ENCODE measurements at regions of chr1 and their contacts with region 1.

Region 1: DNA sequence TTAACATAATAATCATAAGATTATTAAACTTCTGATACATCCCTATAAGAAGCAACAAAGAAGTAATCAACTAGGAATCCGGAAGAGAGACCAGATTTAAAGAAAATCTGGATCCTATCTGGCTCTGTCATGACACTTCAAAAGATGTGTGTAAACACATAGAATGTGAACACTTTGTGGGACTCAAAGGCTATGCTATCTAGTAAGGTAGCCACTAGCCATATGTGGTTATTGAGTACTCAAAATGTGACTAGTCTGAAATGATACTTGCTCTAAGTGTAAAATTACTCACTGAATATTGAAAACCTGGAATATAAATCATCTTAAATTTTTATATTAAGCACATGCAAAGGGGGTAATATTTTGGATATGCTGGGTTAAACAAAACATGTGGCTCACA is 8.7 kb downstream of the FUBP1 start:
- DNase-seq: no peak
- ATAC-seq: no peak
- H3K4me3 Mint-ChIP-seq: no peak overlapping the region
- H3K27ac Mint-ChIP-seq: no peak overlapping the region
- H3K4me1 Mint-ChIP-seq: peaks cover 69% of the 10 kb centered on the region
- H3K27me3 Mint-ChIP-seq: no peaks in the 10 kb centered on the region
- CTCF ChIP-seq: no peak

Region 2: DNA sequence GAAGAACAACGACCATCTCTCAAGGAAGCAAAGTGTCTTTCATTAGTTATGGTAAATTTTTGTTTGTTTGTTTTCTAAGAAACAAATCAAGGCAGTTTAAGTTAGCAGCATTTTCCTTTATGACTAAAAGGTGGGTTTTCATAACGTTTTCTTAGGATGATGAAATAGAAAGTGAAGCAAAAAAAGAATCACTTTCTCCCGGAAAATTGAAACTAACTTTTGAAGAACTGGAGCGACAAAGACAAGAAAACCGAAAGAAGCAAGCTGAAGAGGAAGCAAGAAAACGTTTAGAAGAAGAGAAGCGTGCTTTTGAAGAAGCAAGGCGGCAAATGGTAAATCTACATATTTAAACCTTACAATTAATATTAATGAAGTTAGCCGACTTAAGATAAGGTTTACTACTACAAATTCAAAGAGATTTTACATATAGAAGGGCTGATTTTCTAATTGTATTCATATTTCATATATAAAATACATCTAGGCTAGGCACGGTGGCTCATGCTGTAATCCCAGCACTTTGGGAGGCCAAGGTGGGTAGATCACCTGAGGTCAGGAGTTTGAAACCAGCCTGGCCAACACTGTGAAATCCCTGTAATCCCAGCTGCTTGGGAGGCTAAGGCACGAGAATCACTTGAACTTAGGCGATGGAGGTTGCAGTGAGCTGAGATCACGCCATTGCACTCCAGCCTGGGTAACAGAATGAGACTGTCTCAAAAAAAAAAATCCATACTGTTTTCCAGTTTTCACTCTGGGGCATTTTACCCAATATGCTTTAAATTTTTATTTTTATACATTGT is 43.4 kb before region 1 on chr1:
- CTCF ChIA-PET with region 1: no interaction called
- POLR2A ChIA-PET with region 1: no interaction called
- intact Hi-C with region 1: no loop called
- DNase-seq: no peak
- ATAC-seq: no peak
- H3K4me3 Mint-ChIP-seq: peak overlapping the region; percentile 73
- H3K27ac Mint-ChIP-seq: peak overlapping the region; percentile 74
- H3K4me1 Mint-ChIP-seq: peaks cover 11% of the 10 kb centered on the region
- H3K27me3 Mint-ChIP-seq: no peaks in the 10 kb centered on the region
- CTCF ChIP-seq: no peak

Region 3: GRCh38 chr1:77950873-77951272 is 19.3 kb before region 1 on chr1:
- CTCF ChIA-PET with region 1: interaction called, 3 read pairs
- POLR2A ChIA-PET with region 1: interaction called, 36 read pairs
- intact Hi-C with region 1: no loop called
- DNase-seq: no peak
- ATAC-seq: peak; percentile 51
- H3K4me3 Mint-ChIP-seq: no peak overlapping the region
- H3K27ac Mint-ChIP-seq: peak overlapping the region; percentile 86
- H3K4me1 Mint-ChIP-seq: peaks cover 50% of the 10 kb centered on the region
- H3K27me3 Mint-ChIP-seq: no peaks in the 10 kb centered on the region
- CTCF ChIP-seq: no peak

Region 4: GRCh38 chr1:77958391-77958790 is 11.8 kb before region 1 on chr1:
- CTCF ChIA-PET with region 1: interaction called, 4 read pairs
- POLR2A ChIA-PET with region 1: interaction called, 76 read pairs
- intact Hi-C with region 1: no loop called
- DNase-seq: no peak
- ATAC-seq: no peak
- H3K4me3 Mint-ChIP-seq: no peak overlapping the region
- H3K27ac Mint-ChIP-seq: peak overlapping the region; percentile 28
- H3K4me1 Mint-ChIP-seq: peaks cover 37% of the 10 kb centered on the region
- H3K27me3 Mint-ChIP-seq: no peaks in the 10 kb centered on the region
- CTCF ChIP-seq: no peak